Psoas muscle (tissue), 8 donors: ENCODE measurements at regions of chr15 and their contacts with region 1.

Region 1: DNA sequence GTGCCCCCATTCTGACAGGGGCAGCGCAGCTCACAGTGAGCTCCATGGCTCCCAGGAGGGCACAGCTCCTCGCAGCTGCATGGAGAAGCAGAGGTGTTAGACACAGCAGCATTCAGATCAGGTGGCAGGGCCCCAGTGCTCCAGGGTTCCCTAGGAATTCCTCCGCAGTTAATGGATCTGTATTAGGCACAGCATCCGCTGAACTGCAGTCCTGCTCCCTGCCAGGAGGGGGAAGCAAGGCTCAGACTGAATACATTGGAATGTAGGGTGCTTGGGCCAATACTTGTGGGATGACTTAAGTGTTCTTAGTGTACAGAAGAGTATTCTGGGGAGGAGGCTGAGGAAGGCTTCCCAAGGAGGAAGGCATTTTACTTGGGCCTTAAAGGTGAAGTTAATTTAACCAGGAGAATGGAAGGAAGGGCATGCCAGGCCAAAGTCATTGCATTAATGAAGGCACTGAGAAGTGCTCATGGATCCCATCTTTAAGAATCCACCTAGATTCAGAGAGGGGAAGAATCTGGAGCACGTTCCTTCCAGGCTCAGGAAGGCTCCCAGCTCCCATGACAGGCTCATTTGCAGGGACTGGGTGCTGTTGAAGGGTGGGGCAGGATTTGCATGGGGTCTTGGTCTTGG is 111.6 kb downstream of the RAB11A start:
- DNase-seq: peak; percentile 28 to 63
- ATAC-seq: peak; percentile 57 to 79 (median 68)
- H3K4me3 ChIP-seq: no peak overlapping the region
- H3K27ac ChIP-seq: no peak overlapping the region
- H3K4me1 ChIP-seq: no peaks in the 10 kb centered on the region
- H3K27me3 ChIP-seq: peaks cover 0 to 48% (median 11%) of the 10 kb centered on the region in 3 donors
- CTCF ChIP-seq: peak; percentile 51

Region 2: GRCh38 chr15:65939901-65940617 is 40.9 kb before region 1 on chr15:
- intact Hi-C with region 1: no loop called
- DNase-seq: no peak
- ATAC-seq: peak; percentile 51 to 77 (median 62)
- H3K4me3 ChIP-seq: no peak overlapping the region
- H3K27ac ChIP-seq: peak overlapping the region; percentile 50
- H3K4me1 ChIP-seq: peaks cover 19% of the 10 kb centered on the region
- H3K27me3 ChIP-seq: no peaks in the 10 kb centered on the region
- CTCF ChIP-seq: no peak

Region 3: DNA sequence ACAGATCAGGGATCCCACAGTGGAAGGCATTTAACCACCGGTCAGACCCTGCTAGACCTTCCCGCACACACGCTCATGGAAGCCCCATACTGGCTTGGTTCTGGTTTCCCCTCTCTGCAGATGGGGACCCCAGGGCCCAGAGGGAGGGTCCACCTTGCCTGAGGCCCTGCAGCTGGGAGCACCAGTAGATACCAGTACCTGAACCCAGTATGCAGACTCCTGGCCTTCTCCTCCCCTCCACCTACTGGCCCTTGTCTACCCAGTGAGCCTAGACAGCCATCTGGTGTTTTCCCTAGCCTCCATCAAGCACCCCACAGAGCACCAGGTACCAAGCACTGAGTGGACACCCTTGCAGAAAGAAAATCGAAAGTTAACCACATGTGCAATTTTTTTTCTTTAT is 207.5 kb after region 1 on chr15:
- intact Hi-C with region 1: loop called (anchors 10 kb)
- DNase-seq: no peak
- ATAC-seq: no peak
- H3K4me3 ChIP-seq: no peak overlapping the region
- H3K27ac ChIP-seq: no peak overlapping the region
- H3K4me1 ChIP-seq: no peaks in the 10 kb centered on the region
- H3K27me3 ChIP-seq: peaks cover 0 to 34% (median 9%) of the 10 kb centered on the region in 3 donors
- CTCF ChIP-seq: no peak

Region 4: GRCh38 chr15:66196602-66197001 is 215.7 kb after region 1 on chr15:
- intact Hi-C with region 1: loop called in 1 of 2 experiments (anchors 10 kb)
- DNase-seq: no peak
- ATAC-seq: no peak
- H3K4me3 ChIP-seq: no peak overlapping the region
- H3K27ac ChIP-seq: no peak overlapping the region
- H3K4me1 ChIP-seq: no peaks in the 10 kb centered on the region
- H3K27me3 ChIP-seq: no peaks in the 10 kb centered on the region
- CTCF ChIP-seq: no peak

Region 5: GRCh38 chr15:66287461-66288057 is 306.6 kb after region 1 on chr15:
- intact Hi-C with region 1: loop called in 1 of 2 experiments (anchors 10 kb)
- DNase-seq: no peak
- ATAC-seq: peak in 1 of 4 donors; percentile 52
- H3K4me3 ChIP-seq: no peak overlapping the region
- H3K27ac ChIP-seq: no peak overlapping the region
- H3K4me1 ChIP-seq: peaks cover 9% of the 10 kb centered on the region
- H3K27me3 ChIP-seq: no peaks in the 10 kb centered on the region
- CTCF ChIP-seq: peak; percentile 61